ENCODE measurements at regions of chr12 and their contacts with region 1.

Region 1: DNA sequence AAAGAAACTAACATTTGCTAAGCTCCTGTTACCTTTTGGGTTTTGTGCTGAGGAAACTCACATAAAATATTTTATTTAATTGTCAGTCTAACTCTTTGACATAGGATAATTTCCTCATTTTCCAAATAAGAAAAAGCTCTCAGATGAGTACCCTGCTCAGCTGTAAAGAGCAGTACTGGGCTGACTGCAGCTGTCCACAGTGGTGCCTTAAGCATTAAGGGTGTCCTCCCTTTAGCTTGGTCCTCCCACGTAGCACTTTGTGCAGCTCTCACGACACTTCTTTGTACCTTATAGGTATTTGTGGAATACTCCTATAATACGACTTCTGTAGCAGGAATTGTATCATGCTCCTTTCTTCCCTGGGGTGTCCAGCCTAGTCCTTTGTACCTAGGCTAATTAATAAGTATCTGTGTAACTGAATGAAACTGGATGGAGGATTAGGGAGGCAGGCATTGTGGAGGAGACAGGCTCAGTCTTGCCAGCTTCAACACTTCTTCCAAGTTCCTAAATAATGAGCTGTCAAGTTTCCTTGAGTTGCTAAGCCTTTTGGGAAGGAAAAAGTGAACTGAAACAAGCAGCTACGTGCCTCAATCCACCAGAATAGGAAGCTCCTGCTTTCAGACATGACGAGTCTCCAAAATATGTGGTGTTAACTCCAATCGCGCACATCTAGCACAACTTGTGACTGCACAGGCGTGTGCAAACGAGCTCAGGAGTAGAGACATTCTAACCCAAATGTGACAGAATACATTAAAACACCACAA is 123.0 kb downstream of the SLC38A4 start:
- DNase-seq: peak in 1 of 2 donors; percentile 57
- H3K4me3 ChIP-seq: no peak overlapping the region
- CTCF ChIP-seq: no peak
- POLR2A ChIP-seq: no peak

Region 2: DNA sequence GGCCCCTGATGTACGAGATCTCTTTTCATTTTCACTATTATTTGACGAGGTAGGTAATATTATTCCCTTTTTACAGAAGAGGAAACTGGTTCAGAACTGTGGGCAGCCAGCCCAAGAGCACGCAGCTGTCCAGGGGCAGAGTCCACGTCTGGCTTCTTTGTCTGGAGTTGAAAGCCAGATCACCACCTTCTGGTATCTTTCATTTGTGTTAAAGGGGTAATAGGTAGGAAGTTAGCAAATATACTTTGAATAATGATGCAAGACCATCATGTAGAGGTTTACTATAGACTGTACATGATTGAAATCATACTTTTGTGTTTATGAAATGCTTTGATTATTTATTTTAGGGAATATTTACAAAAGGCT is 521.1 kb after region 1 on chr12:
- intact Hi-C with region 1: no loop called
- DNase-seq: no peak
- H3K4me3 ChIP-seq: no peak overlapping the region
- CTCF ChIP-seq: no peak
- POLR2A ChIP-seq: no peak

Region 3: GRCh38 chr12:47264951-47265350 is 562.2 kb after region 1 on chr12:
- intact Hi-C with region 1: loop called (anchors 5 kb)
- DNase-seq: no peak
- H3K4me3 ChIP-seq: no peak overlapping the region
- CTCF ChIP-seq: no peak
- POLR2A ChIP-seq: no peak